IMR-90 (cell line): ENCODE measurements at regions of chr2 and their contacts with region 1.

Region 1: DNA sequence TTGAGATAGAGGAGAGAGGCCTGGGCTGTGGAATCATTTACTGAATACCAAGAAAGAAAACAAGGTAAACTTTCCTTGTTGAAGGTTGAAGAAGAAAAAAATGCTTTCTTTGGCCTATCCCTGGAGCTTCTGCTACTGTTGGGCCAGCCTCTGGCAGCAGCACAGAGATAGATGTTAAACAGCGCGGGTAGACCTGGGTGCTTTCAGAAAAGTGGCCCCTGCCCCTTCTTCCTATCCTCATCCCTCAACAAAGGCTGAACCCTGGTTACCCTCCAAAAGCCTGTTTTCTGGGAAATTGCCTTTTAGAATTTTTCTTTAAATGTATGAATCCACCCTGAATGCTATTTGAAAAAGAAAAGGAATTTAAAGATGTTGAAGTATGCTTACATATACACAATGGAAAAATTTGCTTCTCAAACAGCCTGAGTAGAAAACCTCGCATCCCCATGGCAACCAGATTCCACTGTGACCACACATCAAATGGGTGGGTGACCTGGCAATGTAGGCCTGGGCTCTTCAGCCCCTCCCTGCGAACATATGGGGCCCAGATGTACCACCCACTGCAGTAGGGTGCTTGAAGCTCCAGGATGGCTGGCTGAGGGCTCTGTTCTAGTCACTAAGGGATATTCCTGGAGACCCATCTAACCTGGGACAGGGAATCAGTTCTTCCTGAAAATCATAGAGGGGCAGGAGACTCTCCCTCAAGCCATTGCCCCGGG is 23.4 kb upstream of the CHRNA1 start:
- DNase-seq: peak; percentile 100
- ATAC-seq: peak; percentile 93
- H3K4me3 ChIP-seq: no peak overlapping the region
- H3K27ac ChIP-seq: peak overlapping the region; percentile 99
- H3K4me1 ChIP-seq: peaks cover 27% of the 10 kb centered on the region
- H3K27me3 ChIP-seq: no peaks in the 10 kb centered on the region
- CTCF ChIP-seq: no peak
- POLR2A ChIP-seq: peak; percentile 12; the same call in 1 of the 2 replicates
- RAD21 ChIP-seq: peak; percentile 12; the same call in 1 of the 2 replicates

Region 2: GRCh38 chr2:174577967-174578589 is 209.6 kb before region 1 on chr2:
- CTCF ChIA-PET with region 1: no interaction called
- POLR2A ChIA-PET with region 1: no interaction called
- dilution Hi-C with region 1: no loop called
- in situ Hi-C with region 1: no loop called
- intact Hi-C with region 1: no loop called
- DNase-seq: peak; percentile 73
- ATAC-seq: peak; percentile 86
- H3K4me3 ChIP-seq: no peak overlapping the region
- H3K27ac ChIP-seq: no peak overlapping the region
- H3K4me1 ChIP-seq: no peaks in the 10 kb centered on the region; the same call in 1 of the 2 replicates
- H3K27me3 ChIP-seq: no peaks in the 10 kb centered on the region
- CTCF ChIP-seq: peak; percentile 86
- POLR2A ChIP-seq: 0 out of 2 replicates have a peak, but pooled peaks have one; percentile 22
- RAD21 ChIP-seq: peak; percentile 90

Region 3: GRCh38 chr2:174764280-174765255 is 23.1 kb before region 1 on chr2 and contains the start of gene CHRNA1:
- CTCF ChIA-PET with region 1: no interaction called
- POLR2A ChIA-PET with region 1: no interaction called
- dilution Hi-C with region 1: no loop called
- in situ Hi-C with region 1: no loop called
- intact Hi-C with region 1: no loop called
- DNase-seq: peak; percentile 84
- ATAC-seq: peak; percentile 70
- H3K4me3 ChIP-seq: no peak within 1 kb of the TSS
- H3K27ac ChIP-seq: peak within 1 kb of the TSS; percentile 73
- H3K4me1 ChIP-seq: peaks cover 22% of the 10 kb centered on the region
- H3K27me3 ChIP-seq: no peaks in the 10 kb centered on the region
- CTCF ChIP-seq: no peak
- POLR2A ChIP-seq: no peak
- RAD21 ChIP-seq: no peak
- total RNA-seq, gene CHRNA1: 0.56 and 0.90 TPM in 2 replicates

Region 4: GRCh38 chr2:174835797-174836255 is 48.2 kb after region 1 on chr2:
- CTCF ChIA-PET with region 1: interaction called, 3 read pairs
- POLR2A ChIA-PET with region 1: interaction called, 3 read pairs
- dilution Hi-C with region 1: no loop called
- in situ Hi-C with region 1: no loop called
- intact Hi-C with region 1: loop called (anchors 2 kb)
- DNase-seq: peak; percentile 97
- ATAC-seq: peak; percentile 67
- H3K4me3 ChIP-seq: no peak overlapping the region; the same call in 1 of the 2 replicates
- H3K27ac ChIP-seq: peak overlapping the region; percentile 100
- H3K4me1 ChIP-seq: peaks cover 17% of the 10 kb centered on the region
- H3K27me3 ChIP-seq: no peaks in the 10 kb centered on the region
- CTCF ChIP-seq: no peak
- POLR2A ChIP-seq: 0 out of 2 replicates have a peak, but pooled peaks have one; percentile 48
- RAD21 ChIP-seq: peak; percentile 7; the same call in 1 of the 2 replicates